Endothelial cell of umbilical vein (primary cell): ENCODE measurements at regions of chr9 and their contacts with region 1.

Region 1: DNA sequence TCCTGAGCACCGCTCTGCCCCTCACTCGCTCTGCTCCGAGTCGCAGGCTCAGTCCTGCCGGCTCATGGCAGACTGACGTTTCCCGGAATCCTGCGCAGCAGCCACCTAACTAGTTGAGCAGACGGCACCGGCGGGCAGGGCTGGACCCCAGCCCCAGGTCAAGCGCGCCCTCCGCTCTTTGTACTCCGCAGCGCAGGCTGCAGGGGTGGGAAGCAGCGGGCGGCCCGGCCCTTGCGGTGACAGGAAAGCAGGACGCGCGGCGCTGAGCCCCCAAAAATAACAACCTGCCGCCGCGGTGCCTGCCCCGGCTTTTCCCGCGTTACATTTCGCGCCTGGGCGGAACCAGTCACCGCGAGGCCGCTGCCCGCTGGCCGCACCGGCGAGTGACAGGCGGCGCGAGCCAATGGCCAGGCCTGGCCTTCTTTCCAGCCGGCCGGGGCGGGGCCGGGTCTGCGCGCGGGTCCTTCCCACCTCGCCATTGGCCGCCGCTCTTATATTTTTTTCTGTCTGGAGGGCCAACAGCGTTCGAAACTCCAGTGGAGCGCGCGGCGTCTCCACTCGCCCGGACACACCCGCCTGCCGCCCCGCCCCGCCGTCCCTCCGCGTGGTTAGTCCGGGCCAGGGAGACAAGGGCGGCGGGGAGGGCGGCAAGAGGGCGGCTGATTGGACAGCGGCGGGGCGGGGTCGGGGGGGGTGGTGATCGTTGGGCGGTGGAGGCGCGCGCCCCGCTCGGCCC is at the start of gene ZNF367:
- DNase-seq: peak; percentile 98
- H3K4me3 ChIP-seq: peak within 1 kb of the TSS; percentile 75 to 84 (median 83)
- H3K27ac ChIP-seq: peak within 1 kb of the TSS; percentile 92
- H3K4me1 ChIP-seq: peaks cover 27% of the 10 kb centered on the region
- H3K27me3 ChIP-seq: no peaks in the 10 kb centered on the region
- CTCF ChIP-seq: no peak
- POLR2A ChIP-seq: peak; percentile 15
- total RNA-seq, gene ZNF367: 8.6 and 10.0 TPM in 2 replicates

Region 2: DNA sequence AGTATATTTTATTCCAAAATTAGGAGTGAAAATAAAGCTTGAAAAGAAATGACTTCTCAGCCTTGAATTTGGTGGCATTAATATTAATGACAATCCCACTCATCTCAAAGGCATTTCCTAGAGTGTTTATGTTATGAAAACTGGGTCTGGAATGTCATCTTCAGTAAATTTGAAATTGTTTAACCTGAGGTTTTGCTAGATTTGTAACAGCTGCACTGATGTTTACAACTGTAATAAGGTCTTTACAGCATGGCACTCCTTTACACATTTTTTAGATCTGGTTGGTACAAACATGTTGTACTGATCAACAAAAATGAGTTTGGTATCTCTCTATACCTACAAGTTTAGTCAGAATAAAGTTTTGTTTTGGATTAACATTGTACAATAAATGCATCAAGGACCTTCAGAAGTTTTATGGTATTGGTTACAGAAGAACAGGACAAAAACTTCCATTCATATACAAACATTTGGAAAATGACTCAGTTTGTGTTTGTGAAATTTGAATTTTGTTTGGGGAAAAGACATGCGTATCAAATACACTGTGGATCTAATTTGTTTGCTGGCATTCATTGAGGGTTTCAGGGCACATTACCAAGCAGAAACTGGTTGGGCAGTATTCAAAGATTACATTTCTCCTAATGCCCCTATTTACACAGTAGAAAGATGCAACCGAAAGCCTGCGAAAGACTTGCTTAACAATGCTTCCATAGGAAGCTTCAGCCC is 1112.3 kb before region 1 on chr9:
- CTCF ChIA-PET with region 1: no interaction called
- POLR2A ChIA-PET with region 1: no interaction called
- dilution Hi-C with region 1: no loop called
- intact Hi-C with region 1: loop called (anchors 5 kb)
- DNase-seq: peak; percentile 35
- H3K4me3 ChIP-seq: no peak overlapping the region
- H3K27ac ChIP-seq: peak overlapping the region; percentile 10
- H3K4me1 ChIP-seq: peaks cover 26% of the 10 kb centered on the region
- H3K27me3 ChIP-seq: no peaks in the 10 kb centered on the region
- CTCF ChIP-seq: no peak
- POLR2A ChIP-seq: no peak

Region 3: DNA sequence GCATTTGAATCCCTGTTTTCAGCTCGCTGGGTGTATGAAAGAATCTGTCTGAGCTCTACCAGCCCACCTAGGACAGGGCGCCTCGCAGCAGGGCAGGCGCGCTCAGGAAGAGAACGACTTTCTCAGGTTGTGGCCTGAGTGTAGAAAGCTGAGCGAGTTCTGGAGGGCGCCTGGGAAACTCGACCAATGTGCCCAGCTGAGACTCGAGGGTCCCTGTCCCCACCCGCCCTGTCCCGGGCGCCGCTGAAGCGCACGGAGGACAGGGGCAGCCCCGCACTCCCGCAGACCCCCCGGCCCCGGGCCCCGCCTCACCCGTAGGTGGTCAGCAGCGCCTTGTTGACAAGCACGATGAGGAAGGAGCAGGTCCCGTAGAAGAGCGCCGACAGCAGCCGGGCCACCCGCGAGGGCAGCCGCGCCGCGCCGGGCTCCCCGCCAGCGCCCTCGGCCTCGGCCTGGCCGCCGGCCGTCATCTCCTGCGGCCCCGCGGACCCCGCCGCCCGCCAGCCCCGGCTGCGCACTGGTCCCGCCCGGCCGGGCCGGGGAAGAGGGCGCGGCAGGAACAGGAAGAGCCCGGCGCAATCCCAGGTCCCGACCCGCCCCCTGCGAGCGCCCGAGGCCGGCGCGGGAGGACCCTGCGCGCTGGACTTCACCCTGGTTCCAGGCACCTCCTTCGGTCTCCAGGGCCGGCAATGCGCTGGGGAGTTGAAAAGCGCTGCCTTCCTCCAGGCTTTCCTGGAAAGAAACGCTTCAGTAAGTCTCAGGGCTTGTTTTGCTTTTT is 34.9 kb before region 1 on chr9 and contains the start of gene SLC35D2:
- CTCF ChIA-PET with region 1: no interaction called
- POLR2A ChIA-PET with region 1: no interaction called
- dilution Hi-C with region 1: no loop called
- intact Hi-C with region 1: loop called (anchors 1 kb)
- DNase-seq: peak; percentile 57
- H3K4me3 ChIP-seq: peak within 1 kb of the TSS; percentile 68 to 83 (median 69)
- H3K27ac ChIP-seq: peak within 1 kb of the TSS; percentile 66
- H3K4me1 ChIP-seq: peaks cover 18% of the 10 kb centered on the region
- H3K27me3 ChIP-seq: no peaks in the 10 kb centered on the region
- CTCF ChIP-seq: no peak
- POLR2A ChIP-seq: peak; percentile 68
- total RNA-seq, gene SLC35D2: 28.4 and 29.9 TPM in 2 replicates

Region 4: DNA sequence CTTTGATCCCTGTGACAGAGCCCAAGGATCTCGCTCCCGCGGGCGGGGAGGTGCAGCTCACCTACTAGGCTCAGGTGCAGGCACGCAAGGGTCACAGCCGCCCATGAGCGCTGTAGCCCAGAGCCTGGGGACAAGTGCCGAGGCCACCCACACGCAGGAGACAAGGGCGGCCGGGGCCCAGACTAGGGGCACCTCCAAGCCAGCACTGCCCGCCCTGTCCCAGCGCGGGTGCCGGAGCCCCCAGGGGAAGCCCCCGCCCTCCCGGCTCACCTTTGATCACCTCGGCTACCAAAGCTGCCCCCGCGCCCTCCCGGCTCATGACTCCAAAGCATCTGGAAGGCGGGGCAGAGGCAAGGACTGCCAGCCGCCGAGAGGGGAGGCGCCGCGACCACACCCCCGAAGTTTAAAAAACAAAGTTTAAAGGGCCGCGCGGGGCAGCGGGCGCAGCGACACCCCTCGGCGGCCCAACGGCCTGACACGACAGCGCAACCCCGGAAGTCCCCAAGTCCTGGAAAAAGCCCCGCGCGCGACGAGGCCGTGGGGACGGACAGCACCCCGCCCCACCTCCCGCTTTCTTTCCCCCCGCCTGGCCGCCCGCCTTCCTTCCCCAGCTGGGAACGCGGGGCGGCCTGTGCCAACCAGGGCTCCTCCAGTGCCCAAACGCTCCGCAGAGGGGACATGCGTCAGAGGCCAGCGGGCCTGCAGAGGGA is 148.4 kb after region 1 on chr9:
- CTCF ChIA-PET with region 1: no interaction called
- POLR2A ChIA-PET with region 1: no interaction called
- dilution Hi-C with region 1: no loop called
- intact Hi-C with region 1: loop called (anchors 5 kb)
- DNase-seq: peak; percentile 11
- H3K4me3 ChIP-seq: peak overlapping the region; percentile 59 to 72 (median 60)
- H3K27ac ChIP-seq: no peak overlapping the region
- H3K4me1 ChIP-seq: peaks cover 5% of the 10 kb centered on the region
- H3K27me3 ChIP-seq: peaks cover 8 to 38% of the 10 kb centered on the region in 2 experiments
- CTCF ChIP-seq: peak; percentile 27 to 37
- POLR2A ChIP-seq: no peak

Region 5: DNA sequence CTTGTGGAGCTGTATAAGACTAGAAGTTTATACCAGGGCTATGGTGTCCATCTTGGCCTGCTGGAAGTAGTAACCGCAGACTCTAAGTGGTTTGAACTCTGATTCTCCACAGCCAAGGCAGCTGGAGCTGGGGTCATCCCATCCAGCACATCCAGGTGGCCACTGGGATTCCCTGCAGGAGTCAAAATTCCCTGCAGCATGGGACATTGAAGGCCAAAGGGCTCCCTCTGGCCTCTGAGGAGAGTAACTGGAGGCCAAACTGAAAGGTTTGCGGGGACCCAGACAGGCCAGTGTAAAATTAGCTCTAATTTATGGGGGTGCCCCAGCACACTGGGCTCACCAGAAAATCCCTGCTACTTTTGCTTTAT is 249.1 kb after region 1 on chr9:
- CTCF ChIA-PET with region 1: interaction called, 4 read pairs
- POLR2A ChIA-PET with region 1: no interaction called
- dilution Hi-C with region 1: no loop called
- intact Hi-C with region 1: loop called (anchors 1 kb)
- DNase-seq: no peak
- H3K4me3 ChIP-seq: no peak overlapping the region
- H3K27ac ChIP-seq: no peak overlapping the region
- H3K4me1 ChIP-seq: no peaks in the 10 kb centered on the region
- H3K27me3 ChIP-seq: no peaks in the 10 kb centered on the region
- CTCF ChIP-seq: no peak
- POLR2A ChIP-seq: no peak